Activated B cell treated with CpG ODN at 0.5 μM for 24 hours (primary cell): ENCODE measurements at regions of chr4 and their contacts with region 1.

Region 1: GRCh38 chr4:122732329-122733026 is at the start of gene BBS12:
- DNase-seq: peak; percentile 90
- ATAC-seq: peak; percentile 97
- H3K4me3 Mint-ChIP-seq: peak within 1 kb of the TSS; percentile 98
- H3K27ac Mint-ChIP-seq: peak within 1 kb of the TSS; percentile 98
- H3K4me1 Mint-ChIP-seq: peaks cover 13% of the 10 kb centered on the region
- H3K27me3 Mint-ChIP-seq: no peaks in the 10 kb centered on the region
- CTCF ChIP-seq: no peak
- total RNA-seq, gene BBS12: 2.5 and 3.3 TPM in 2 replicates

Region 2: GRCh38 chr4:121696581-121697461 is 1035.7 kb before region 1 on chr4 and contains the start of gene ANXA5:
- CTCF ChIA-PET with region 1: no interaction called
- POLR2A ChIA-PET with region 1: no interaction called
- intact Hi-C with region 1: loop called (anchors 1 kb)
- DNase-seq: peak; percentile 76
- ATAC-seq: peak; percentile 92
- H3K4me3 Mint-ChIP-seq: peak within 1 kb of the TSS; percentile 94
- H3K27ac Mint-ChIP-seq: peak within 1 kb of the TSS; percentile 90
- H3K4me1 Mint-ChIP-seq: peaks cover 34% of the 10 kb centered on the region
- H3K27me3 Mint-ChIP-seq: no peaks in the 10 kb centered on the region
- CTCF ChIP-seq: no peak
- total RNA-seq, gene ANXA5: 86.8 and 89.9 TPM in 2 replicates

Region 3: DNA sequence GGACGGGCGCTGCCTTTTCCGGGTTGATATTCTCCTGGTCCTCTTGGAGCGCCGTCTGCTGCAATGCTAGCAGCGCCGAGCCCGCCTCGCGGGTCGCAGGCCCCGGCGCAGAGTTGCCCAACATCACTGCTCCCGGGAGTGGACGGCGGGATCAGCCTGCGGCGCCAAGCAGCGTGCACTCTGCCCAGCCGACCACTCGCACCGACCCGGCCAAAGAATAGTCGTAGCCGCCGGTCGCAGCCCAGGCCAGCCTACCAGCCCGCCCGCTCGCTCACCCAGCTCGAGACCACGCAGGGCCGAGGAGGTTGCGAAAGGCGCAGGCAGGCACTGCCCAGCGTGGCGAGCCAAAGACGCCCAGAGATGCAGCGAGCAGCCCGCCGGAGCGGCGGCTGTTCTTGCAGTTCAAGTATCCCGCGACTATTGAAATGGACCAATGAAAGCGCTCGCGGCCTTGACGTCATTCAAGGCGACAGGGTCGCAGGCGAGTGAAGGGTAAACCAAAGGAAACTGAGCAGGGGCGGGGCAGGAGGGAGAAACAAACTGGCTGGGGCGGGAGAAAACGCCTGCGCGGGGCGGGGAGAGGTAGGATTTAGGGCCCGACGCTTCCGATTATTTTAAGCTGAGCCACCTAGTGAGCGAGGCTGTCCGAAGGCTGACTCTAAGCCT is 908.8 kb before region 1 on chr4 and contains the start of gene CCNA2:
- CTCF ChIA-PET with region 1: no interaction called
- POLR2A ChIA-PET with region 1: no interaction called
- intact Hi-C with region 1: loop called (anchors 1 kb)
- DNase-seq: peak; percentile 86
- ATAC-seq: peak; percentile 99
- H3K4me3 Mint-ChIP-seq: peak within 1 kb of the TSS; percentile 87
- H3K27ac Mint-ChIP-seq: peak within 1 kb of the TSS; percentile 82
- H3K4me1 Mint-ChIP-seq: peaks cover 17% of the 10 kb centered on the region
- H3K27me3 Mint-ChIP-seq: no peaks in the 10 kb centered on the region
- CTCF ChIP-seq: no peak
- total RNA-seq, gene CCNA2: 1.4 and 2.0 TPM in 2 replicates

Region 4: GRCh38 chr4:122151982-122152710 is 580.3 kb before region 1 on chr4 and contains the start of gene BLTP1:
- CTCF ChIA-PET with region 1: no interaction called
- POLR2A ChIA-PET with region 1: no interaction called
- intact Hi-C with region 1: loop called (anchors 2 kb)
- DNase-seq: peak; percentile 85
- ATAC-seq: peak; percentile 95
- H3K4me3 Mint-ChIP-seq: peak within 1 kb of the TSS; percentile 97
- H3K27ac Mint-ChIP-seq: peak within 1 kb of the TSS; percentile 97
- H3K4me1 Mint-ChIP-seq: peaks cover 39% of the 10 kb centered on the region
- H3K27me3 Mint-ChIP-seq: no peaks in the 10 kb centered on the region
- CTCF ChIP-seq: no peak
- total RNA-seq, gene BLTP1: 39.1 and 44.4 TPM in 2 replicates

Region 5: GRCh38 chr4:122827879-122828601 is 95.6 kb after region 1 on chr4:
- CTCF ChIA-PET with region 1: no interaction called
- POLR2A ChIA-PET with region 1: no interaction called
- intact Hi-C with region 1: loop called (anchors 1 kb)
- DNase-seq: no peak
- ATAC-seq: peak; percentile 77
- H3K4me3 Mint-ChIP-seq: peak overlapping the region; percentile 81
- H3K27ac Mint-ChIP-seq: peak overlapping the region; percentile 32
- H3K4me1 Mint-ChIP-seq: peaks cover 18% of the 10 kb centered on the region
- H3K27me3 Mint-ChIP-seq: peaks cover 70% of the 10 kb centered on the region
- CTCF ChIP-seq: no peak

Region 6: GRCh38 chr4:122922877-122923511 is 190.5 kb after region 1 on chr4:
- CTCF ChIA-PET with region 1: interaction called, 5 read pairs
- POLR2A ChIA-PET with region 1: interaction called, 5 read pairs
- intact Hi-C with region 1: loop called (anchors 1 kb)
- DNase-seq: peak; percentile 70
- ATAC-seq: peak; percentile 97
- H3K4me3 Mint-ChIP-seq: peak overlapping the region; percentile 98
- H3K27ac Mint-ChIP-seq: peak overlapping the region; percentile 91
- H3K4me1 Mint-ChIP-seq: peaks cover 13% of the 10 kb centered on the region
- H3K27me3 Mint-ChIP-seq: no peaks in the 10 kb centered on the region
- CTCF ChIP-seq: no peak

Region 7: DNA sequence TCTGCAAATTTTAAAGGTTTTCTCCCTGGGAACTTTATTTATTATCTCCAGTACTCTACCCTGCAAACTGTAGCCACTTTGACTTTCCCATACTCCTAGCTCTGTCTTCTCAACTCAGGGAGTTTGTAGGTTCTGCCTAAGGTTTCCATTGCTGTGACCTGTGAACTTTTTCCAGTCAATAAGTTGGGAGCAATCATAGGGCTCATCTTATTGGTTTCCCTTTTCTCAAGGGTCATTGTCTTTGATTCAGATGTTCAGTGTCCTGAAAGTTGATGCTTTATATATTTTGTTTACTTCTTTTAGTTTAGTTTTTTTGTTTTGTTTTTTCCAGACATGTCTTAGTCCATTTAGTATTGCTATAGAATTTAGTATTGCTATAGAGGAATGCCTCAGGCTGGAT is 275.2 kb after region 1 on chr4:
- CTCF ChIA-PET with region 1: no interaction called
- POLR2A ChIA-PET with region 1: no interaction called
- intact Hi-C with region 1: no loop called
- DNase-seq: no peak
- ATAC-seq: no peak
- H3K4me3 Mint-ChIP-seq: no peak overlapping the region
- H3K27ac Mint-ChIP-seq: no peak overlapping the region
- H3K4me1 Mint-ChIP-seq: no peaks in the 10 kb centered on the region
- H3K27me3 Mint-ChIP-seq: no peaks in the 10 kb centered on the region
- CTCF ChIP-seq: no peak

Region 8: DNA sequence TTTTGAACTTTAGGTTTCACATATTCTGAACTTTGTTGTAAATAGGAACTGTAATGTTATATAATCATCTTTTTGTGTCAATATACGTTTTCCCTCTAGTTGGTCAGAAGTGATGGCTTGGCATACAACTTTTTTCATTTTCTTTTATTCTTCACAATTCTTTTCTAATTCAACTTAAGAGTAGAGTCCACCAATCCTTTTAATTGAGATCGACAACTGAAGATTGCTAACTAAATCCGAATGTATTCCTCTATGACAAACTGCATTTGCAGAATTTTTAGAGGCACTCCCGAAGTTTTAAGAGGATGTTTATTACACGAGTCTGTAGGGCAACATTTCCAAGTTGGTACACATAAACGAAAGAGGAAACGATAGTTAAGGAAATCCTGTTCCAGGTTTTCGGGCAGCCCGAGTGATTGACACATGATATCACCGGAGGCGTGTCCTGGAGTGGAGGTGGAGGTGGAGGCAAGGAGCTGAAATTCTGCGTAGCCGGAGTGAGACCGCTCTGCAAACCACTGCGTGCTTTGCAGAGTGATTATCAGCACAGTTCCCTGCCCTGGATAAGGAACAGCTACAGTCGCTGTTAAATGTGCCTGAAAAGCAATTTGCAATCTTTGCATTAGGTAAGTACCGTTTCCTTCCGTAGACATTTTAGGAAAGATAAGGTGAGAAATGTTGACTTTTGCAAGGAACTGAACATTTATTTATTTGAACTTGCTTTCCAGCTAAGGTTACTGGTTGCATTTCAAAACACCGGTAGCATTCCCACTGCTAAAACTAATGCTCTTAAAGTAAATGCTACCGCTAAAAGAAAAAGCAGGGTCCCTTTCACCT is 664.0 kb after region 1 on chr4 and contains the start of gene SPRY1:
- CTCF ChIA-PET with region 1: no interaction called
- POLR2A ChIA-PET with region 1: no interaction called
- intact Hi-C with region 1: loop called (anchors 1 kb)
- DNase-seq: peak; percentile 47
- ATAC-seq: peak; percentile 45
- H3K4me3 Mint-ChIP-seq: peak within 1 kb of the TSS; percentile 88
- H3K27ac Mint-ChIP-seq: peak within 1 kb of the TSS; percentile 59
- H3K4me1 Mint-ChIP-seq: peaks cover 32% of the 10 kb centered on the region
- H3K27me3 Mint-ChIP-seq: peaks cover 12% of the 10 kb centered on the region
- CTCF ChIP-seq: no peak
- total RNA-seq, gene SPRY1: 4.0 and 4.1 TPM in 2 replicates